AG04449 (cell line): ENCODE measurements at regions of chr14 and their contacts with region 1.

Region 1: DNA sequence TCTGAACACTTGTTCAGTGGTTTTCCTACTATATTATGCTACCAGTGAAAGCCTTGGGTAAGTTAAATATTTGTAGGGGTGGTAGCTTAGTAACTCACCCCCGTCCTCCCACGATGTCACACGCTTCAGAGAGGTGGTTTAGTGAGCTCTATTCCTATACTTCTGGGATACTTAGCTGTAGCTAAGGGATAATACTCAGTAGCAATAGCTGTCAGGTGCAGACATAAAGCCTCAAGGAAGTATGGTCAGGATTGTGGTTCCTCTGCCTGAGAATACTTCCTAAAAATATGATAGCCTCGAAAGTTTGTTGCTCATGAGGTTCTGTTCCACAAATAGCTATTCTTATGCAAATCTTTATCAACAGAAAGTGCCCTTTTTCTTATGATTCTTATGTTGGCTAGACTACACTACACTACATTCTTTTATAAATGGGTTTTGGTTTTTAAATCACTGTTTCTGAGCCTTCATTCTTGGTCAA is 11.9 kb downstream of the DLST start:
- DNase-seq: no peak
- H3K4me3 ChIP-seq: no peak overlapping the region
- CTCF ChIP-seq: no peak

Region 2: GRCh38 chr14:74881431-74882361 is 12.0 kb before region 1 on chr14 and contains the start of gene DLST:
- CTCF ChIA-PET with region 1: interaction called, 36 read pairs
- POLR2A ChIA-PET with region 1: interaction called, 4 read pairs
- DNase-seq: no peak
- H3K4me3 ChIP-seq: peak within 1 kb of the TSS; percentile 91
- CTCF ChIP-seq: no peak